HCT116 (cell line): ENCODE measurements at regions of chr5 and their contacts with region 1.

Region 1: DNA sequence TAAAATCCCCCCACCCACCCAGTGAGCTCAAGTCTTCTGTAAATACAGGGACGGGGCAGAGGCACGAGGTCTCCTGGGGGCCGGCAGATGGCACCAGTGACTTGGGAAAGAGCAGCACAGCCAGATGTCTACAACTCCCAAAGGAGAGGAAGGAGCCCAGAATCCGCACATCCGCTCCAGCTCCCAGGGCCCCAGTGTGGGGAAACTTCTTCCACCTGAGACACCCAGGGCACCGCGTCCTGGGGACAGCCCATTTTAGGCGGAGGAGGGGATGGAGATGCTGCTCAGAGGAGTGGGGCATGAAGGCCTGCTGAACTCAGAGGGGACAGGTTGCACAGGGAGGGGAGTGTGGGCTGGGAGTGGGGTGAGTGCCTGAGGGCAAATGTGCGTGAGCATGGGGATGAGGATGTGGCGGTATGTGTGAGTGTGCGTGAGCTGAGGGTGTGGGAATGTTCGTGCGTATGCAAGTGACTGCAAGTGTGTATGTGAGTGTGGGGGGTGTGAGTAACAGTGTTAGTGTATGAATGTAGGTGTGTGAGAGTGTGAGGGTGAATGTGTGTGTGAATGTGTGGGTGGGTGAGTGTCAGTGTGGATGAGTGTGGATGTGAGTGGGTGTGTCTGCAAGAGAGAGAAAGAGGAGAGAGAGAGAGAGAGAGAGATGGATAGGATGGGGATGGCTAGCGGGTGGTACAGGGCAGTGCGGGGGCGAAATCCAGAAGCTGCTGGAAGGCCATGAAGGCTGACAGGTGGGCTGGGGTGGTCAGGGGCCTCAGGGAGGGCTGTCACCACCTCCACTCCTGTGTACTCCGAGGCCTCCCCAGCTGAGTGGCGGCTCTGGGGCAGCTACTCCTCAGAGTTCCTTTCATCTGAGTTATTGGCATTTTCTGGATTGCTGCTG is 63.5 kb downstream of the DUSP1 start:
- DNase-seq: no peak
- ATAC-seq: peak; percentile 98
- H3K4me3 ChIP-seq: no peak overlapping the region
- H3K27ac ChIP-seq: no peak overlapping the region
- H3K4me1 ChIP-seq: peaks cover 0 to 5% of the 10 kb centered on the region in 2 experiments; a peak in 1 of 4 replicates
- H3K27me3 ChIP-seq: no peaks in the 10 kb centered on the region; the same call in 1 of the 2 replicates
- CTCF ChIP-seq: peak in 2 of 3 experiments; percentile 66 to 74; a peak in 4 of 6 replicates
- POLR2A ChIP-seq: no peak
- RAD21 ChIP-seq: no peak

Region 2: DNA sequence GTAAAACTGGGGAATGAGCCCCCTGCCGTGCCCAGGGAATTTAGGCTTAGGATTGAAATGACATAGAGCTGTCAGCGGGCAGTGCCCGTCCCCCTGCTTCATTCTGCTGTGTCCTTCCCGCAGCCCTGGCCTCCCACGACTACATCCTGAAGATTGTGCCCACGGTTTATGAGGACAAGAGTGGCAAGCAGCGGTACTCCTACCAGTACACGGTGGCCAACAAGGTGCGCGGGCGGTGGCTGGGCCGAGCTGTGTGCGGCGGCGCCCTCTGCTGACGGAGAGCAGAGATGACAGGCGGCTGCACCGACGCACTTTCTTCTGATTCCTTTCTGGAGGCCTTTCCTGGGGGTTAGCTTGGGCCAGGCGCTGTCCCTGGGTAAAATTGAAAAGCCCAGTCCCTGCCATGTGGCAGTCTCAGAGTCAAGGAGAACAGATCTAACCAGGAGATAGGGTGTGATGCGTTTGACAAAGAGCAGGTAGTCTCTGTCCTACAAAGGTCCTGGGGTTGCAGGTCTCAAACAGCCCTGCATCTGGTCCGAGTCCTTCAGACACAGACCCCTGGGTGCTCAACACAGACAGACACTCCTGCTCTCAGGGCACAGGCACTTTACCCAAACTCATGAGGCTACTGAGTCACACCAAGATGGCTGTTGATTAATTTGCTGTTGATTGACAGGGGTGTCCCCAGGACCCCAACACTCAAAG is 224.9 kb after region 1 on chr5:
- CTCF ChIA-PET with region 1: interaction called, 36 read pairs
- POLR2A ChIA-PET with region 1: no interaction called
- RAD21 ChIA-PET with region 1: interaction called in 1 of 2 experiments, 5 read pairs
- intact Hi-C with region 1: no loop called
- DNase-seq: peak; percentile 10
- ATAC-seq: peak; percentile 96
- H3K4me3 ChIP-seq: no peak overlapping the region
- H3K27ac ChIP-seq: no peak overlapping the region
- H3K4me1 ChIP-seq: no peaks in the 10 kb centered on the region; a peak in 1 of 4 replicates
- H3K27me3 ChIP-seq: no peaks in the 10 kb centered on the region
- CTCF ChIP-seq: peak; percentile 87 to 91 (median 90)
- POLR2A ChIP-seq: no peak
- RAD21 ChIP-seq: peak; percentile 97

Region 3: DNA sequence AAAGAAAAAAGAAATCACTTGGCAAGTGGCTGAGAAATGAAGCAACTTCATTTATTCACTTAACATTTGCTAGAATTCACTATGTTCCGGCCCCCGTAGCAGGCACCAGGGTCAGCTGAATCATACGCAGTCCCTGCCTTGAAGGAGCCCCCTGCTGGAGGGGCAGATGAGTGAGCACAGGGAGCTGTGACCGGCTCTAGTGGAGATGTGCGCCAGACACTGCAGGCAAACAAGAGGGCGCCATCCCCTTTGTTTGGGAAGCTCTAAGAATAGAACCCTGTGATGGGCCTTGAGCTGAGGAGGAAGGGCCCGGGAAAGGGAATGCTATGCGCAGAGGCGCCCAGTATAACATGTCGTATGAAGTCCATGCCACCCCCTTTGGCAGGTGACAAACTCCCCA is 231.5 kb after region 1 on chr5:
- CTCF ChIA-PET with region 1: interaction called, 13 read pairs
- POLR2A ChIA-PET with region 1: no interaction called
- RAD21 ChIA-PET with region 1: interaction called, 4 to 6 read pairs
- intact Hi-C with region 1: no loop called
- DNase-seq: peak; percentile 26
- ATAC-seq: peak; percentile 90
- H3K4me3 ChIP-seq: no peak overlapping the region
- H3K27ac ChIP-seq: no peak overlapping the region
- H3K4me1 ChIP-seq: no peaks in the 10 kb centered on the region
- H3K27me3 ChIP-seq: no peaks in the 10 kb centered on the region
- CTCF ChIP-seq: peak; percentile 68 to 95 (median 70)
- POLR2A ChIP-seq: no peak
- RAD21 ChIP-seq: peak; percentile 62

Region 4: GRCh38 chr5:173283318-173284288 is 576.1 kb after region 1 on chr5:
- CTCF ChIA-PET with region 1: interaction called, 4 read pairs
- POLR2A ChIA-PET with region 1: interaction called, 3 read pairs
- RAD21 ChIA-PET with region 1: interaction called in 1 of 2 experiments, 3 read pairs
- intact Hi-C with region 1: loop called (anchors 2 kb)
- DNase-seq: peak; percentile 72
- ATAC-seq: peak; percentile 96
- H3K4me3 ChIP-seq: peak overlapping the region in 1 of 2 experiments; percentile 19; a peak in 2 of 4 replicates
- H3K27ac ChIP-seq: no peak overlapping the region
- H3K4me1 ChIP-seq: peaks cover 8 to 13% of the 10 kb centered on the region in 2 experiments
- H3K27me3 ChIP-seq: no peaks in the 10 kb centered on the region
- CTCF ChIP-seq: peak; percentile 82 to 91 (median 87)
- POLR2A ChIP-seq: no peak
- RAD21 ChIP-seq: peak; percentile 91

Region 5: GRCh38 chr5:173581408-173582215 is 874.1 kb after region 1 on chr5:
- CTCF ChIA-PET with region 1: no interaction called
- POLR2A ChIA-PET with region 1: no interaction called
- RAD21 ChIA-PET with region 1: no interaction called
- intact Hi-C with region 1: loop called (anchors 1 kb)
- DNase-seq: peak; percentile 35
- ATAC-seq: peak; percentile 94
- H3K4me3 ChIP-seq: no peak overlapping the region
- H3K27ac ChIP-seq: no peak overlapping the region
- H3K4me1 ChIP-seq: no peaks in the 10 kb centered on the region
- H3K27me3 ChIP-seq: no peaks in the 10 kb centered on the region
- CTCF ChIP-seq: peak; percentile 71 to 96 (median 91)
- POLR2A ChIP-seq: no peak
- RAD21 ChIP-seq: peak; percentile 72

Region 6: GRCh38 chr5:174317259-174317894 is 1609.8 kb after region 1 on chr5:
- CTCF ChIA-PET with region 1: interaction called, 3 read pairs
- POLR2A ChIA-PET with region 1: no interaction called
- RAD21 ChIA-PET with region 1: no interaction called
- intact Hi-C with region 1: loop called (anchors 5 kb)
- DNase-seq: no peak
- ATAC-seq: peak; percentile 97
- H3K4me3 ChIP-seq: no peak overlapping the region
- H3K27ac ChIP-seq: no peak overlapping the region
- H3K4me1 ChIP-seq: no peaks in the 10 kb centered on the region
- H3K27me3 ChIP-seq: peaks cover 30% of the 10 kb centered on the region
- CTCF ChIP-seq: peak; percentile 79 to 94 (median 91)
- POLR2A ChIP-seq: no peak
- RAD21 ChIP-seq: peak; percentile 95